ENCODE measurements at regions of chr11 and their contacts with region 1.

Region 1: DNA sequence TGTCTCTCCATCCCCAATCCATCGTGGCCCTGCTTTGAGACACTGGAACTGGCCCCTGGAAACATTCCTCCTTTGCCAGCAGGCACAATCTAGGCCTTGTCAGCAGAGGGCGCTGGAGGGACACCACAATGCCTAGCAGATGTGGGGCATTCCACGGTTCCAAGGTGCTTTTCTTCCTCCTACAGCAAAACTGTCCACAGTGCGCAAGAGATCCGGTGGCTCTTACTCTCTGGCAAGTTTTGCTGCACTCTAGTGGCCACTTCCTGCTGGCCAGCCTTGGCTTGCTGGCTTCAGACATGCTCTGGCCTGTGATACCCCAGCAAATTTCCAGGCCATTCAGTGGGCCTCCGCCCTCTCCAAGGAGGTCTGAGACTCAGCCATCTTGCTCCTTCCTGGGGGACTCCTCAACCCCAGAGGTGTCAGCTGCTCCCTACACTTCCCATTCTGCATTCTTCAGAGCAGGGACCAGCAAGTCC is 17.1 kb upstream of the RBM4B start:
- DNase-seq: peak; percentile 92
- ATAC-seq: peak; percentile 97
- H3K4me3 Mint-ChIP-seq: no peak overlapping the region
- H3K27ac Mint-ChIP-seq: no peak overlapping the region
- H3K4me1 Mint-ChIP-seq: no peaks in the 10 kb centered on the region
- H3K27me3 Mint-ChIP-seq: no peaks in the 10 kb centered on the region

Region 2: GRCh38 chr11:66835768-66836405 is 141.1 kb after region 1 on chr11:
- CTCF ChIA-PET with region 1: interaction called, 32 read pairs
- POLR2A ChIA-PET with region 1: no interaction called
- intact Hi-C with region 1: loop called (anchors 1 kb)
- DNase-seq: no peak
- ATAC-seq: no peak
- H3K4me3 Mint-ChIP-seq: no peak overlapping the region
- H3K27ac Mint-ChIP-seq: peak overlapping the region; percentile 6
- H3K4me1 Mint-ChIP-seq: peaks cover 20% of the 10 kb centered on the region
- H3K27me3 Mint-ChIP-seq: no peaks in the 10 kb centered on the region

Region 3: DNA sequence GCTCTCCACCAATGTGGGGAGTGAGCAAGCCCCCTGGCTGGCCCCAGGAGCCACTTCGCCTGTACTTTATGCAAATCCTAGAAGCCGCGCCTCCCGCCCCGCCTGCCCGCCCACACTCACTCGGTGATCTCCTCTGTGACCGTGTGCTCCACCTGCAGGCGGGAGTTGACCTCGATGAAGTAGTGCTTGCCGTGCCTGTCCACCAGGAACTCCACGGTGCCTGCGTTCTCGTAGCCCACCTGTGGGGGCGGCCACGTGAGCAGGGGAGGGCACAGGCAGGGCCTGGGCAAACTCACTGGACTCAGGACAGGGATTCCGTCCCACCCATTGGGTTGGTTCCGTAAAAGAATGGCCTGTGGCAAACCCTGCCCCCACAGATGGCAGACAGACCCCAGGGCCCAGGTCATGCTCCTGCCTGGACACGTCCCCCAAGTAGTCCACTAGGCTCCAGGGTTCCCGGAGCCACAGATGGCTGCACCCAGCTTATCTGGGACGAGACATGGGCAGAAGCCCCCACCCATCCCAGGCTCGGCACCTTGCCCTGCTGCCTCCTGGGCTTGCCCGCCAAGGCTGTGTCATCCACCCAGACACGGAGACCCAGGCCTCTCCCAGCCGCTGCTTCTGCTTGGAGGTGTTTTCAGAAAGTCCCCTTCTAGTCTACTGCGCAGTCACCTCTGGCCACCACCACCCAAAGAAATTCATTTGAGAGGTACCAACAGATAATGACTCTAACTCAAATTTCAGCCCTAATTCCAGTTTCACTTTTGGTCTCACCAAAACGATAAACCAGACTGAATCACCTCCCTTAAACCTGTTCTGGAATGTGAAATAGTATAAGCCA is 174.2 kb after region 1 on chr11:
- CTCF ChIA-PET with region 1: no interaction called
- POLR2A ChIA-PET with region 1: no interaction called
- intact Hi-C with region 1: loop called in 1 of 2 experiments (anchors 1 kb)
- DNase-seq: peak; percentile 93
- ATAC-seq: peak; percentile 97
- H3K4me3 Mint-ChIP-seq: no peak overlapping the region
- H3K27ac Mint-ChIP-seq: peak overlapping the region; percentile 51
- H3K4me1 Mint-ChIP-seq: peaks cover 16% of the 10 kb centered on the region
- H3K27me3 Mint-ChIP-seq: no peaks in the 10 kb centered on the region

Region 4: GRCh38 chr11:66883016-66883968 is 188.5 kb after region 1 on chr11:
- CTCF ChIA-PET with region 1: interaction called, 16 read pairs
- POLR2A ChIA-PET with region 1: no interaction called
- intact Hi-C with region 1: loop called (anchors 1 to 5 kb)
- DNase-seq: peak; percentile 86
- ATAC-seq: peak; percentile 84
- H3K4me3 Mint-ChIP-seq: no peak overlapping the region
- H3K27ac Mint-ChIP-seq: no peak overlapping the region
- H3K4me1 Mint-ChIP-seq: peaks cover 14% of the 10 kb centered on the region
- H3K27me3 Mint-ChIP-seq: no peaks in the 10 kb centered on the region

Region 5: GRCh38 chr11:66976048-66976467 is 281.3 kb after region 1 on chr11:
- CTCF ChIA-PET with region 1: no interaction called
- POLR2A ChIA-PET with region 1: no interaction called
- intact Hi-C with region 1: loop called in 1 of 2 experiments (anchors 2 kb)
- DNase-seq: peak; percentile 49
- ATAC-seq: peak; percentile 55
- H3K4me3 Mint-ChIP-seq: no peak overlapping the region
- H3K27ac Mint-ChIP-seq: no peak overlapping the region
- H3K4me1 Mint-ChIP-seq: peaks cover 4% of the 10 kb centered on the region
- H3K27me3 Mint-ChIP-seq: peaks cover 9% of the 10 kb centered on the region

Region 6: GRCh38 chr11:67071420-67072284 is 376.9 kb after region 1 on chr11:
- CTCF ChIA-PET with region 1: interaction called, 3 read pairs
- POLR2A ChIA-PET with region 1: no interaction called
- intact Hi-C with region 1: loop called in 1 of 2 experiments (anchors 2 kb)
- DNase-seq: peak; percentile 90
- ATAC-seq: peak; percentile 96
- H3K4me3 Mint-ChIP-seq: no peak overlapping the region
- H3K27ac Mint-ChIP-seq: no peak overlapping the region
- H3K4me1 Mint-ChIP-seq: peaks cover 3% of the 10 kb centered on the region
- H3K27me3 Mint-ChIP-seq: no peaks in the 10 kb centered on the region